SK-N-SH (cell line): ENCODE measurements at regions of chr10 and their contacts with region 1.

Region 1: GRCh38 chr10:47361293-47361692 is 13.1 kb downstream of the RBP3 start:
- DNase-seq: peak; percentile 81
- H3K4me3 ChIP-seq: peak overlapping the region in 1 of 2 experiments; percentile 38; a peak in 1 of 4 replicates
- H3K27ac ChIP-seq: no peak overlapping the region
- H3K4me1 ChIP-seq: peaks cover 0 to 8% of the 10 kb centered on the region in 2 experiments; a peak in 1 of 4 replicates
- H3K27me3 ChIP-seq: no peaks in the 10 kb centered on the region
- CTCF ChIP-seq: peak; percentile 80
- EP300 ChIP-seq: no peak
- RAD21 ChIP-seq: peak; percentile 58

Region 2: DNA sequence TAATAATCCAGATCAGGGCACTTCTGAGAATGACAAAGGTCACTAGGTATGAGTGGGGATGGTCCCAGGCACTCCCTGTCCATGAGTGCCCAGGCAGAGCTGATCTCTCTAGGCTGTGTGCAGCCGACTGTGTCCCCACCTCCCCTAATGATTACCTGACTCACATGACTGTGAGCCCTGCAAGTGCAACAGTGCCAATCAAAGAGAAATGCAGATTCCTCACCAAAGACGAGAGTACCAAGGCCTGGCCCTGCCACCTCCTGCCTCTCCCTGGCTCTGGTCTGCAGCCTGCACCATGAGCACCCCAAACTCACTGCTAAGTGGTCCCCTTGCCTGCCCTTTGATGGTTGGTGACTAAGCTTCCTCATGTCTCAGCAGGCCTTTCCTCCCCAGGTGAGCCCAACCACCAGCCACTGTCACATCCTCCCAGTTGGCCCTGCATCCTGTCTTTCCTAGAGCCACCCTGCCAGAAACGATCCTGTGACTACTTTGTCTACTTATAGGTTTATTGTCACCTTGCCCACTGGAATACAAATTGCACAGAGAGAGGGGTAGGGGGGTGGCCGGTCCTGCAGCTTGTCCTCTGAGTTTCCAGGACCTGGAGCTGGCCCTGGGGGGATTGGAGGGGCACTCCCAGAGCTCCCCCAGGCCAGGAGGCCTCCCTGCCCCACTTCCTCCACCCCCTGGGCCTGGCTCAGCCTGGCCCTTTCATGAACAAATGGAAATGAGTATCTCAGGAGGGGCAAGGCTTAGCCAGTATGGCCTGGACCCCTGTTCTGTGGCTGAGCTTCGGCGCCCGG is 83.7 kb before region 1 on chr10:
- CTCF ChIA-PET with region 1: no interaction called
- POLR2A ChIA-PET with region 1: no interaction called
- DNase-seq: no peak
- H3K4me3 ChIP-seq: no peak overlapping the region
- H3K27ac ChIP-seq: no peak overlapping the region
- H3K4me1 ChIP-seq: peaks cover 0 to 9% of the 10 kb centered on the region in 2 experiments; a peak in 1 of 4 replicates
- H3K27me3 ChIP-seq: no peaks in the 10 kb centered on the region
- CTCF ChIP-seq: no peak
- EP300 ChIP-seq: no peak
- RAD21 ChIP-seq: no peak

Region 3: GRCh38 chr10:47346581-47347302 is 14.6 kb before region 1 on chr10:
- CTCF ChIA-PET with region 1: interaction called, 23 read pairs
- POLR2A ChIA-PET with region 1: no interaction called
- DNase-seq: no peak
- H3K4me3 ChIP-seq: no peak overlapping the region
- H3K27ac ChIP-seq: peak overlapping the region in 1 of 2 experiments; percentile 85; a peak in 1 of 4 replicates
- H3K4me1 ChIP-seq: peaks cover 0 to 33% of the 10 kb centered on the region in 2 experiments; a peak in 2 of 4 replicates
- H3K27me3 ChIP-seq: peaks cover 28% of the 10 kb centered on the region
- CTCF ChIP-seq: no peak
- EP300 ChIP-seq: no peak
- RAD21 ChIP-seq: no peak

Region 4: DNA sequence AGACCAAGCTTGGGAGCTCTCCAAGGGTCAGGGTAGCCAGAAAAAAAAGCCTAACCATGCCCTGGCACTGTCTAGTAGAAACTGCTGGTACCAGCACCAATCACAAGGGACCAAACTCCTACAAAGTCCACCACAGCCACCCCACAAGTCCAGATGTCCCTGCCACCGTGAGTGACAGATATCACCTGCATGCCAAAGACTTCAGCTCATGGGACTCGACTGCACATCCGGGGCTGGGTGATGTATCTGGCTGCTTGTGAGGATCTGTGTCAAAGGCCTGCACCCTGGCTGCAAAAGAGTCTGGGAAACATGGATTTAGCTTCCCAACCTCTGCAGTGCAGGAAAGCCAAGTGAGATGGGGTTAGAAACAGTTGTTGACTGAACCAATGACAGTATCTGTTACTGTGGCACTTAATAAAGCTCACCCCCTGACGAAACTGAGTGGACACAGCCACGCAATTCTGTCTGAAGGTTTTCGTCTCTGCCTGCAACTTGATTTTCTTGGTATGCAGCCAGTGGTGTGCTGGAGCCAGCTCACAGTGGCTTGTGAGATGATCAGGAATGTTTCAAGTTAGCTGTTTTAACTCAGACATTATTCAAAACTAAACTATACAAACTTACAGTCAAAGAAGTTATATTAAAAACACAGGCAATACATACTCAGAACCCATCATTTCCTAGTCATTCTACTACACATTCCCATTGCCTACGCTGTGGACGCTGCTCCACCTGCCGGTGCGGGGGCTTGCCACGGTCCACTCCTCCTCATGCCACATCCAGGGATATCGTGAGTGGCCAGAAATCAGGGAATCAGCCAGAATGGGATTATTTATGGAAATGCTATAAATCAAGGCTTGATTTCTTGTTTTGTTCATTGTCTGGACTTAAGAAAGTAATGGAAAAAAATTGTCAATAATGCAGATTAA is 13.6 kb after region 1 on chr10:
- CTCF ChIA-PET with region 1: interaction called, 50 read pairs
- POLR2A ChIA-PET with region 1: no interaction called
- DNase-seq: no peak
- H3K4me3 ChIP-seq: no peak overlapping the region
- H3K27ac ChIP-seq: no peak overlapping the region
- H3K4me1 ChIP-seq: peaks cover 0 to 28% of the 10 kb centered on the region in 2 experiments; a peak in 2 of 4 replicates
- H3K27me3 ChIP-seq: no peaks in the 10 kb centered on the region
- CTCF ChIP-seq: no peak
- EP300 ChIP-seq: no peak
- RAD21 ChIP-seq: no peak